ENCODE measurements at regions of chr4 and their contacts with region 1.

Region 1: DNA sequence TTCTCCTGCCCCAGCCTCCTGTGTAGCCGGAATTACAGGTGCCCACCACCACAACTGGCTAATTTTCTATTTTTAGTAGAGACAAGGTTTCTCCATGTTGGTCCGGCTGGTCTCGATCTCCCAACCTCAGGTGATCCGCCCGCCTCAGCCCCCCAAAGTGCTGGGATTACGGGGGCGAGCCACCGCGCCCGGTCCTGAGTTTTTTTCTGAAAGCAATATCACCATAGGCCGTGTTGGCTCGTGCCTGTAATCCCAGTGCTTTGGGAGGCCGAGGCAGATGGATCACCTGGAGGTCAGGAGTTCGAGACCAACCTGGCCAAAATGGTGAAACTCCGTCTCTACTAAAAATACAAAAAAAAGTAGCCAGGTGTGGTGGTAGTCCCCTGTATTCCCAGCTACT is 136.3 kb upstream of the TECRL start:
- DNase-seq: no peak
- H3K4me3 ChIP-seq: no peak overlapping the region
- H3K27ac ChIP-seq: no peak overlapping the region
- H3K4me1 ChIP-seq: no peaks in the 10 kb centered on the region
- H3K27me3 ChIP-seq: no peaks in the 10 kb centered on the region
- CTCF ChIP-seq: no peak
- POLR2A ChIP-seq: no peak

Region 2: DNA sequence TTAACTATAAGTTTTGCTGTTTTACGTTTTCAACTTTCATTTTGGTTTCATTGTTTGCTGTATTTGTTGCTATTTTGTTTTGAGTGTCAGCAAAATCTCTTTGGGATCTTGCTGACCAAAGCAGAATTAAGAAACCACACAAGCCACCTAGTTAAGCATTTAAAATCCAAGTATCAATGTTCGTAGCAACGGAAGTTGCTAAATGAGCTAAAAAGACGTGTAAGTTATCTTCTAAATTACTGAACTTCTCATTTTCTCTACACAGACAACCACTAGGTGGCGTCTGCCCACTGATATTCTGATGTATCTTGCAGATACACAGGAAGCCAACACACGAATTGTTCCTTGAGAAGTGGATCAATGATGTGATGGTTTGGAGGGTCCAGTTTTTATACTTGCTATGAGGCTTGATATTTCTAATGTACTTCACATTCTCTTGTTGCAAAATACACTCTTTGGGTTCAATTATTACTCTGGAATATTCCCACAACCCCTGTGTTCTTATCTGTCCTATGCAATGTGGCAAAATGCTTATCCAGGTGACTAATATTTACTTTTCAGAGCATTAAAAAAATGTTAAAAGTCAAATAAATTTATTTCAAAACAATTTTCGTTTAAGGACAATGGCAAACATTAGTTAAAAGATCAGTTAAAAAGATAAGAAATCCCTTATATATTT is 386.8 kb before region 1 on chr4:
- intact Hi-C with region 1: loop called (anchors 10 kb)
- DNase-seq: no peak
- H3K4me3 ChIP-seq: peak overlapping the region in 1 of 4 donors; percentile 55
- H3K27ac ChIP-seq: no peak overlapping the region
- H3K4me1 ChIP-seq: no peaks in the 10 kb centered on the region
- H3K27me3 ChIP-seq: no peaks in the 10 kb centered on the region
- CTCF ChIP-seq: peak; percentile 35 to 74 (median 64)
- POLR2A ChIP-seq: no peak

Region 3: GRCh38 chr4:64407000-64407399 is 138.6 kb before region 1 on chr4:
- intact Hi-C with region 1: no loop called
- DNase-seq: no peak
- H3K4me3 ChIP-seq: no peak overlapping the region
- H3K27ac ChIP-seq: no peak overlapping the region
- H3K4me1 ChIP-seq: peaks cover 0 to 5% (median 0%) of the 10 kb centered on the region in 3 donors
- H3K27me3 ChIP-seq: no peaks in the 10 kb centered on the region
- CTCF ChIP-seq: no peak
- POLR2A ChIP-seq: no peak

Measured in esophagus squamous epithelium (tissue), 5 donors.